Activated B cell treated with CpG ODN at 0.5 μM for 24 hours (primary cell): ENCODE measurements at regions of chr10 and their contacts with region 1.

Region 1: GRCh38 chr10:4188406-4188805 is 403.4 kb upstream of the KLF6 start:
- DNase-seq: no peak
- ATAC-seq: no peak
- H3K4me3 Mint-ChIP-seq: no peak overlapping the region
- H3K27ac Mint-ChIP-seq: no peak overlapping the region
- H3K4me1 Mint-ChIP-seq: peaks cover 4% of the 10 kb centered on the region
- H3K27me3 Mint-ChIP-seq: no peaks in the 10 kb centered on the region
- CTCF ChIP-seq: no peak

Region 2: DNA sequence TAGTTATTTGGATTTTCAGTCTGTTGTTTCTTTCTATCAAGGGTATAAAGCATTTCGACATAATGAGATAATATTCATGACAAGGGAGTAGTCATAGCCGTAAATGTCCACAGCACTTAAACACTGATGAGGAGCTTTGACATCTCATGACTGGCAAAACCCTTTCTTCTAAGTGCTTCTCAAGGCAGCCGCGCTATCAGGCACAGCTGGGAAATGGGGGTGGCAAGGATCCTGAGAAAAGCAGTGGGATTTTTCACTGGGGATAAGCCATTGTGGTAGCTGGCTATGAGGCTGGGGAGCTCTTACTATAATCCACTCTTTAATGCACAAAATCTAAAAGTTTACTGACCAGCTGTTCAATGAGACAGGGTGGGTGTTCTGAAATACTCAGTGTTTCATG is 89.8 kb after region 1 on chr10:
- CTCF ChIA-PET with region 1: no interaction called
- POLR2A ChIA-PET with region 1: interaction called, 14 read pairs
- intact Hi-C with region 1: no loop called
- DNase-seq: no peak
- ATAC-seq: no peak
- H3K4me3 Mint-ChIP-seq: no peak overlapping the region
- H3K27ac Mint-ChIP-seq: no peak overlapping the region
- H3K4me1 Mint-ChIP-seq: no peaks in the 10 kb centered on the region
- H3K27me3 Mint-ChIP-seq: peaks cover 3% of the 10 kb centered on the region
- CTCF ChIP-seq: no peak